ENCODE measurements at regions of chrX and their contacts with region 1.

Region 1: DNA sequence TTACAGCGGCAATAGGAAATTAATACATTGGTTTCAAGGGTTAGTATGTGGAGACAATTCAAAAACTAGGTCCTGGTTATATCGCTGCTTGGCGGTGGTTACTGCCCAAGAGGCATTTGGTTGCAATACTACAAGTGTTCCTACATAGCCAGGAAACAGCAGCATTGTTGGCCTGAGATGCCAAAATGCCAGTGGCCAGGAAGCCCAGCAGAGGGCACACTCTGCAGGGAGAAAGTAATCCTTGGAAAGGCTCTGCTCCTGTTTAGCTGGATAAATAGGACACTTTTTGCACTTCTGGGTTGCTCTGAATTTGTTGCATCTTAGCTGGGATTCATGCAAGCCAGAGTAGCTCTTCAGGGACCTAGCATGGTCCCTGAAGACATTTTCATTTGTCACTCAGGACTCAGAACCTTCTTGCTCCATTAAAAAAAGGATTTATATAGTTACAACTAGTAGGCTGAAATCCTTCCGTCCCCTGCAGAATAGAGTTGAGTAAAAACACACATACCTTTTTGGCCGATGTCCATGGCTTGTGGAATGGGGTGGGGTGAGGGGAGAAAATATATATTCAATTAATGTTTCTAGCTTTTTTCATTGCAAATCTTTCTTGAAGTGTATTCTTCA is 8.1 kb upstream of the GPR119 start:
- ATAC-seq: peak in 7 of 8 experiments; percentile 48 to 84 (median 62)
- H3K4me3 ChIP-seq: no peak overlapping the region
- H3K27ac ChIP-seq: no peak overlapping the region
- H3K4me1 ChIP-seq: no peaks in the 10 kb centered on the region

Region 2: DNA sequence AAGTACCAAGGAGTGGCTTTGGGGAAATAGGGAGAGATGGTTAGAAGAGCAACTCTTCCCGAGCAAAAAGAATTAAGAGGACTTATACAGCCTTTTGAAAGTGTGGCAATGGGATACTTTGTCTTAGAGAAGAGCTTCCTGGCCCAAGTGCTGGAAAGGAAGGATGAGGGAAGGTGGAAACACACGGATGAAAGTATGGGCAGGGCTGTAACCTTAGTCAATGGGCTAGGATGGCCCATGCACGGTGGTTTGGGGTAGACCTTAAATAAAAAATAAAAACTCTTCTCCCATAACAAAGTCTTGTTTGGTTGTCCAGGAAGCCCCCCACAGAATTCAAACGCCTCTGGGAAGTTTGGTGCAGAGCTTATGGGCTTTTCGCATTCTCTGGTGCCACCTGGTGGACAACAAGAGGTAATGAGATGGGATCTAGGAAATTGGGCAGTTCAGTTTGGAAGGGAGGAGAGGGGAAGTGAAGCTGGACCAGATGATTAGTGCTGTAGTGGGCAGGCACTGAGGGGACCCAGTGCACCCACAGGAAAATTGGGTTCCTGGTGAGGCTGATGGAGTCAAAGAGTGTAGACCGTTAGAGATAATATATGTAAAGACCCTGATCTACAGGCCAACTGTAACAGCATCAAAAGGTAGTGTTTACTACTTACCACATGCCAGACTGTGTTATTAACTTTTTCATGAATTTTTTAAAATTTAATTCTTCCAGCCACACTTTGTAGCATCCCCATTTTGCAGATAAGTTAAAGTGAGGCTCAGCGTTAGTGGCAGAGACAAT is 523.3 kb after region 1 on chrX:
- in situ Hi-C with region 1: loop called in 5 of 9 experiments (anchors 10 to 25 kb)
- ATAC-seq: peak in 2 of 8 experiments; percentile 17 to 54
- H3K4me3 ChIP-seq: no peak overlapping the region
- H3K27ac ChIP-seq: no peak overlapping the region
- H3K4me1 ChIP-seq: no peaks in the 10 kb centered on the region